ENCODE measurements at regions of chr19 and their contacts with region 1.

Region 1: GRCh38 chr19:35090506-35091237 is 25.0 kb upstream of the FXYD3 start:
- DNase-seq: peak; percentile 84
- H3K4me3 ChIP-seq: peak overlapping the region; percentile 42
- H3K27ac ChIP-seq: peak overlapping the region; percentile 99
- H3K4me1 ChIP-seq: peaks cover 56% of the 10 kb centered on the region
- CTCF ChIP-seq: peak; percentile 85

Region 2: GRCh38 chr19:34943861-34944573 is 146.7 kb before region 1 on chr19:
- CTCF ChIA-PET with region 1: no interaction called
- POLR2A ChIA-PET with region 1: no interaction called
- intact Hi-C with region 1: no loop called
- DNase-seq: no peak
- H3K4me3 ChIP-seq: no peak overlapping the region
- H3K27ac ChIP-seq: no peak overlapping the region
- H3K4me1 ChIP-seq: no peaks in the 10 kb centered on the region
- CTCF ChIP-seq: no peak

Region 3: DNA sequence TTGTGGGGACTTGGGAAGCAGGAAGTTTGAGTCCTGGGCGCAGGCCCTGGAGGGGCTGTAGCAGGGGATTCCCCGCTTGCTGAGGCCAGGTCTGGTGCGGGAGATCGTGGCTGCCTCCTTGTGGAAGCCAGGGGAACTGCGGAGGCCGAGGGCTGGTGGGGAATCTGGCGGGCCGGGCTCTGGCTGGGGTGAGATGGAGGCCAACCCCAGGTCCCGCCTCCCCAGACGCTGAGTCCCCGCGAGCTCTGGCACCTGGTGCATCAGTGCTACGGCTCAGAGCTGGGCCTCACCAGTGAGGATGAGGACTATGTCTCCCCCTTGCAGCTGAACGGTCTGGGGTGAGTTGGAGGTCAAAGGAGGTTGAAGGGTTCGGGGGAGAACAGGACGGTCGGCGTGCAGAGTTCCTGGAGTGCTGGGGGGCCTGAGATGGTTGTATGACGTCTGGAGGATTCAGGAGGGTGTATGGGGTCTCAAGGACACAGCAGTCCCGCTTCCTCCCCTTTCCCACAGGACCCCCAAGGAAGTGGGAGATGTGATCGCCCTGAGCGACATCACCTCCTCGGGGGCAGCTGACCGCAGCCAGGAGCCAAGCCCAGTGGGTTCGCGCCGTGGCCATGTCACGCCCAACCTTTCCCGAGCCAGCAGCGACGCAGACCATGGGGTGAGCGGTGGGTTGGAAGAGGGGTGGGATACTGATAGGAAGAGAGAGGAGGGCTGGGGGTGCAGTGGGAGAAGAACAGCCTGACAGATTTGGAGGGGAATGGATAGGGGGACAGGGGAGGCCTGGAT is 77.4 kb before region 1 on chr19:
- CTCF ChIA-PET with region 1: no interaction called
- POLR2A ChIA-PET with region 1: no interaction called
- intact Hi-C with region 1: no loop called
- DNase-seq: peak; percentile 62
- H3K4me3 ChIP-seq: no peak overlapping the region
- H3K27ac ChIP-seq: no peak overlapping the region
- H3K4me1 ChIP-seq: no peaks in the 10 kb centered on the region
- CTCF ChIP-seq: peak; percentile 85

Region 4: GRCh38 chr19:35044317-35045117 is 46.2 kb before region 1 on chr19:
- CTCF ChIA-PET with region 1: no interaction called
- POLR2A ChIA-PET with region 1: interaction called, 4 read pairs
- intact Hi-C with region 1: loop called (anchors 1 kb)
- DNase-seq: peak; percentile 56
- H3K4me3 ChIP-seq: no peak overlapping the region
- H3K27ac ChIP-seq: no peak overlapping the region
- H3K4me1 ChIP-seq: peaks cover 11% of the 10 kb centered on the region
- CTCF ChIP-seq: peak; percentile 99

Region 5: DNA sequence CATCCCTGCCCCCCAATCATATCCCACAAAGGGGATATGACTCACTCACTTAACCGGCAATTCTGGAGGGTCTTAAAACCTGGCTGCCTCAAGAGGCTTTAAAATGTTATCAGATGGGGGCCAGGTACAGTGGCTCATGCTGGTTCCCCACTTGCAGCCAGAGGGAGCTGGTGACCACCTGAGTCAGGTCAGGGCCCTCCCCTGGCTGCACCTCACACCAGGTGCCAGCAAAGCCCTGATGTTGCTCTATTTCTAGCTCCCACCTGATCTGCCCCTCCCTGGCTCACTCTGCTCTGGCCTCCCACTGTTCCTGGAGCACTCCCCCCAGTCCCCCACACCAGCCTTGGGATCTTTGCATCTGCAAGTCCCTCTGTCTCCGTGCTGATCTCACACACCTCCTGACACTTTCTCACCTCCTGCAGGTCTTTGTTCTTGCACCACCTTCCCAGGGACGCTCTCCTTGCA is 34.9 kb before region 1 on chr19:
- CTCF ChIA-PET with region 1: interaction called, 12 read pairs
- POLR2A ChIA-PET with region 1: interaction called, 5 read pairs
- intact Hi-C with region 1: loop called (anchors 1 kb)
- DNase-seq: peak; percentile 76
- H3K4me3 ChIP-seq: no peak overlapping the region
- H3K27ac ChIP-seq: no peak overlapping the region
- H3K4me1 ChIP-seq: peaks cover 14% of the 10 kb centered on the region
- CTCF ChIP-seq: peak; percentile 81

Region 6: DNA sequence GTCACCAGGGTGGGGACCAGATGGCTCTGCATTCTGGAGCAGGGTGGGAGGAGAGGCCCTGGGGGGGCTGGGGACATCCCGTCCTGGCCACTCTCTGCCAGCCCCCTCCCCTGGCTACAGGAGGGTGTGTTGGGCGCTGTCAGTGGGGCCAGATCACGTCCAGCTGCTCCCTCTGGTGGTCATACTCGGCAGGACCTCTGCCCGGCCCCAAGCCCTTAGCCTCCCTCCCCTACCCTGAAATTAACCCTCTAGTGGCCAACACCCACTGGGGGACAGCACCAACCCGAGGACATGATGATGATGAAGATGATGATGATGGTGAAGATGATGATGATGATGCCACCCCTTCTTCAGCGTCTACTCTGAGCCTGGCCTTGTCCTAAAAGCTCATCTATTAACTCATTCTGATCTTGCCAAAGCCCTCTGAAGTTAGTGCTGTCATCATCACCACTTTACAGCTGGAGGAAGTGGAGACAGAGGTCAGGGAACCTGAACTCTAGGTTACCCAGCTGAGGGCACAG is 44.8 kb after region 1 on chr19:
- CTCF ChIA-PET with region 1: interaction called, 3 read pairs
- POLR2A ChIA-PET with region 1: no interaction called
- intact Hi-C with region 1: loop called (anchors 2 kb)
- DNase-seq: peak; percentile 79
- H3K4me3 ChIP-seq: no peak overlapping the region
- H3K27ac ChIP-seq: no peak overlapping the region
- H3K4me1 ChIP-seq: peaks cover 9% of the 10 kb centered on the region
- CTCF ChIP-seq: peak; percentile 91